HepG2 (cell line): ENCODE measurements at regions of chr4 and their contacts with region 1.

Region 1: GRCh38 chr4:165207431-165208220 is at the start of gene KLHL2:
- DNase-seq: peak; percentile 49
- ATAC-seq: peak; percentile 86
- H3K4me3 ChIP-seq: peak within 1 kb of the TSS; percentile 78 to 92 (median 87)
- H3K27ac ChIP-seq: peak within 1 kb of the TSS; percentile 43
- H3K4me1 ChIP-seq: peaks cover 41% of the 10 kb centered on the region
- H3K27me3 ChIP-seq: peaks cover 0 to 3% of the 10 kb centered on the region in 2 experiments; a peak in 1 of 5 replicates
- CTCF ChIP-seq: peak; percentile 5; the same call in 1 of the 2 replicates
- EP300 ChIP-seq: no peak
- POLR2A ChIP-seq: peak in 1 of 2 experiments; percentile 30; a peak in 2 of 4 replicates
- RAD21 ChIP-seq: 0 out of 2 replicates have a peak, but pooled peaks have one; percentile 52
- total RNA-seq, gene KLHL2: 14.4 and 17.6 TPM in 2 replicates

Region 2: DNA sequence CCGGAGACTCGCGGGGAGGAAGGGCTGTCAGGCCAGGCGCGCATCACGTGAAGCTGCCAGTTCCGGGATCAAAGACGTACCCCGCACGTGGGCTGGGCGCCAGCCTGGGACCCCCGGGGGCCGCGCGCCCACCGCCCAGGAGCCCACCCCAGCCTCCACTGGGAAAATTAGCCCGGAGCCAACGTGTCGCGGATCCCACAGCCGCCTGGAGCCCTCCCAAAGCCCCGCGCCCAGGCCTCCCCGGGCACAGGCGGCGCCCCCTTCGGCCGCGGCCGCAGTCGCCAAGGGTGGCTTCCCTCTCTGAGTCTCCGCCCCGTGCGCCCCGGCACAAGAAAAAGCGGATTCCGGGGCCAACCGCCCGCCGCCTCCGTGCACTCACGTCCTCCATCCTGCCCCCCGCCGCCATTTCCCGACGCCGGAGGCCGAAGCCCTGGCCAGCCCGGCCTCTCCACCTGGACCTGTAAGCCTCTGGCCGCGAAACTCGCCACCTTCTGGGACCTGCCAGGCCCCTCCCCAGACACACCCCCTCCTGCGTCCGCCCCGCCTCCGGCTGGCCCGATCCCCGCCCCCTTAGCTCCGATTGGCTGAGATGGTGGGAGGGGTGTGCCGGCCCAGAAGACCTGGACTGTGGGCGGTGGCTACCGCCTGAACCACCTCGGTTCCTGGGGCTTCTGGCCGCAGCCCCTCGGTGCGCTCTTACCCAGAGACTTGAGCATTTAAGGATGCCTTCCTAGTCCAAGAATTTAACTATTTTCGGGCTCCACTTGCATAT is 95.1 kb before region 1 on chr4 and contains the start of gene TMEM192:
- CTCF ChIA-PET with region 1: no interaction called
- POLR2A ChIA-PET with region 1: interaction called, 3 read pairs
- in situ Hi-C with region 1: no loop called
- intact Hi-C with region 1: loop called (anchors 5 kb)
- DNase-seq: peak; percentile 85
- ATAC-seq: peak; percentile 96
- H3K4me3 ChIP-seq: peak within 1 kb of the TSS; percentile 78 to 96 (median 91)
- H3K27ac ChIP-seq: peak within 1 kb of the TSS; percentile 92
- H3K4me1 ChIP-seq: peaks cover 16% of the 10 kb centered on the region
- H3K27me3 ChIP-seq: no peaks in the 10 kb centered on the region
- CTCF ChIP-seq: peak; percentile 27; the same call in 1 of the 2 replicates
- EP300 ChIP-seq: peak in 1 of 2 experiments; percentile 16; a peak in 1 of 4 replicates
- POLR2A ChIP-seq: peak; percentile 80 to 92
- RAD21 ChIP-seq: peak; percentile 43; the same call in 1 of the 2 replicates
- total RNA-seq, gene TMEM192: 14.1 and 19.9 TPM in 2 replicates

Region 3: GRCh38 chr4:165131247-165131832 is 76.3 kb before region 1 on chr4:
- CTCF ChIA-PET with region 1: no interaction called
- POLR2A ChIA-PET with region 1: no interaction called
- in situ Hi-C with region 1: no loop called
- intact Hi-C with region 1: loop called (anchors 5 kb)
- DNase-seq: peak; percentile 57
- ATAC-seq: peak; percentile 93
- H3K4me3 ChIP-seq: no peak overlapping the region
- H3K27ac ChIP-seq: no peak overlapping the region
- H3K4me1 ChIP-seq: peaks cover 15% of the 10 kb centered on the region
- H3K27me3 ChIP-seq: peaks cover 0 to 11% of the 10 kb centered on the region in 2 experiments; a peak in 2 of 5 replicates
- CTCF ChIP-seq: peak; percentile 85
- EP300 ChIP-seq: no peak
- POLR2A ChIP-seq: no peak
- RAD21 ChIP-seq: peak; percentile 82

Region 4: DNA sequence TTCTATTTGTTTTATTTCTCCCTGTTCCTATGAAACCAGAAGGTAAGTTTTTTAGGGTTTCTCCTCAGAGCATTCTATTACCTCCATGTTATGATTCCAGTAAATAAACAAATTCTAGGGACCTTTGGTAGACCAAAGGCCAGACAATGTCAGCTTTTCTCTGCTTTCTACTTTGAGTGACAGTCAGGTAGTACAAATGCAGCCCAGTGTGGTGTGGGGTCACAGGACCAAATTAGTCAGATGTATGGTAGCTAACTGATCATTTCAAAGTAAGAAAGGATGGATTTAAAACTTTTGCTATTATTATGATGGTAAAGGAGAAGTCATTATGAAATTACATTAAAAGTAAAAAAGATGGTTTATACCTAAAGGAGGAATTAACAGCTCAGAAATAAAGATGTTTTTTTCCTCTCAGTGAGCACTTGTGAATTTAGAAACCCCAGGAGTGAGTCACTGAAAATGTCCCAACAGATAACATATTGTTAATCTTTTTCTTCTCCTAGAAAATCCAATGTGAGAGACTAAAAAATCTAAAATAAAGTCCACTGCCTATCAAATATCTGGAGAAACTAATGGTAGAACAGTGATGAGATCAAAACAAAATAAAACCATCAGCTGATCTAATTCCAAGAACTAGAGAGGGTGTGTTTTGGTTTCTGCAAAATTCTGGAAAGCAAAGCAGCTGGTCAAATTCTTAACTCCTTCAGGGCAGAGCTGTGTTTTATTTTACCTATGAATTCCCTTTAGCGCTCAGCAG is 16.9 kb before region 1 on chr4:
- CTCF ChIA-PET with region 1: no interaction called
- POLR2A ChIA-PET with region 1: no interaction called
- in situ Hi-C with region 1: no loop called
- intact Hi-C with region 1: no loop called
- DNase-seq: no peak
- ATAC-seq: peak; percentile 82
- H3K4me3 ChIP-seq: no peak overlapping the region
- H3K27ac ChIP-seq: no peak overlapping the region
- H3K4me1 ChIP-seq: peaks cover 28% of the 10 kb centered on the region
- H3K27me3 ChIP-seq: peaks cover 0 to 12% of the 10 kb centered on the region in 2 experiments; a peak in 3 of 5 replicates
- CTCF ChIP-seq: no peak
- EP300 ChIP-seq: no peak
- POLR2A ChIP-seq: no peak
- RAD21 ChIP-seq: no peak

Region 5: DNA sequence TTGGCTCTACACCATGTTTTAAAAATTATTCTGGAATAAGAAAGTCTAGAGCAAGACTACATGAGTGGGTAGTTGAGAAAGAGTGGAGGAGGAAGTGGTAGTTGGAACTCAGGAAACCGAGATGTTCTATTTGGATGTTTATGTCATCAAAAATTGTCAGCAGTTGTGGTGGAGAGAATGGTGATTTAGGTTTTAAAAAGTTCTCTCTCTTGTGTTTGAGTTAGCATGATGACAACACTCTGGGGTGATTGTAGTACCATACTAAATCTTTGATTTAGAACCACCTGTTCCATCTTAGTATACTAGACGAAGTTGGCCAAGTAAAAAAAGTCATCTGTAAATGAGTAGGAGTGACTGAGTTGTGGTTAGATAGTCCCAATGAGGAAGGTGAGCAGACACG is 40.5 kb after region 1 on chr4:
- CTCF ChIA-PET with region 1: no interaction called
- POLR2A ChIA-PET with region 1: no interaction called
- in situ Hi-C with region 1: no loop called
- intact Hi-C with region 1: loop called (anchors 2 kb)
- DNase-seq: no peak
- ATAC-seq: no peak
- H3K4me3 ChIP-seq: no peak overlapping the region
- H3K27ac ChIP-seq: no peak overlapping the region
- H3K4me1 ChIP-seq: peaks cover 12% of the 10 kb centered on the region
- H3K27me3 ChIP-seq: no peaks in the 10 kb centered on the region
- CTCF ChIP-seq: no peak
- EP300 ChIP-seq: no peak
- POLR2A ChIP-seq: no peak
- RAD21 ChIP-seq: no peak

Region 6: GRCh38 chr4:165327211-165328100 is 119.8 kb after region 1 on chr4 and contains the start of gene MSMO1:
- CTCF ChIA-PET with region 1: no interaction called
- POLR2A ChIA-PET with region 1: interaction called, 7 read pairs
- in situ Hi-C with region 1: loop called (anchors 5 kb)
- intact Hi-C with region 1: loop called (anchors 2 kb)
- DNase-seq: peak; percentile 97
- ATAC-seq: peak; percentile 97
- H3K4me3 ChIP-seq: peak within 1 kb of the TSS; percentile 77 to 96 (median 87)
- H3K27ac ChIP-seq: peak within 1 kb of the TSS; percentile 94
- H3K4me1 ChIP-seq: peaks cover 37% of the 10 kb centered on the region
- H3K27me3 ChIP-seq: peaks cover 0 to 5% of the 10 kb centered on the region in 2 experiments; a peak in 1 of 5 replicates
- CTCF ChIP-seq: no peak
- EP300 ChIP-seq: peak in 1 of 2 experiments; percentile 78; a peak in 2 of 4 replicates
- POLR2A ChIP-seq: peak; percentile 76 to 96
- RAD21 ChIP-seq: peak; percentile 30
- total RNA-seq, gene MSMO1: 135 and 216 TPM in 2 replicates